Dorsolateral prefrontal cortex (tissue), 120 donors: ENCODE measurements at regions of chr18 and their contacts with region 1.

Region 1: GRCh38 chr18:74551936-74552555 is 17.7 kb downstream of the CNDP1 start:
- DNase-seq: peak; percentile 49 to 93 (median 82)
- H3K4me3 ChIP-seq: peak overlapping the region in 3 of 59 donors; percentile 2 to 7 (median 2)
- H3K27ac ChIP-seq: peak overlapping the region in 50 of 59 donors; percentile 0 to 83 (median 61)
- H3K27me3 ChIP-seq: no peaks in the 10 kb centered on the region
- CTCF ChIP-seq: peak; percentile 56 to 95 (median 88)

Region 2: GRCh38 chr18:74196220-74197119 is 355.6 kb before region 1 on chr18:
- intact Hi-C with region 1: loop called (anchors 5 to 10 kb)
- DNase-seq: peak in 3 of 10 donors; percentile 50 to 54 (median 50)
- H3K4me3 ChIP-seq: peak overlapping the region in 41 of 59 donors; percentile 1 to 58 (median 35)
- H3K27ac ChIP-seq: peak overlapping the region in 1 of 59 donors; percentile 29
- H3K27me3 ChIP-seq: no peaks in the 10 kb centered on the region
- CTCF ChIP-seq: peak; percentile 82 to 99 (median 93)

Region 3: GRCh38 chr18:74353169-74353775 is 198.8 kb before region 1 on chr18:
- intact Hi-C with region 1: loop called (anchors 2 to 5 kb)
- DNase-seq: peak; percentile 43 to 90 (median 79)
- H3K4me3 ChIP-seq: no peak overlapping the region
- H3K27ac ChIP-seq: peak overlapping the region in 1 of 59 donors; percentile 18
- H3K27me3 ChIP-seq: no peaks in the 10 kb centered on the region
- CTCF ChIP-seq: peak; percentile 62 to 98 (median 89)

Region 4: GRCh38 chr18:74412116-74412880 is 139.7 kb before region 1 on chr18:
- intact Hi-C with region 1: loop called in 1 of 2 experiments (anchors 5 kb)
- DNase-seq: peak; percentile 26 to 91 (median 84)
- H3K4me3 ChIP-seq: peak overlapping the region in 51 of 59 donors; percentile 6 to 62 (median 34)
- H3K27ac ChIP-seq: peak overlapping the region in 42 of 59 donors; percentile 1 to 76 (median 46)
- H3K27me3 ChIP-seq: peaks cover 0 to 11% (median 0%) of the 10 kb centered on the region in 45 donors
- CTCF ChIP-seq: peak in 5 of 56 donors; percentile 5 to 33 (median 17)

Region 5: GRCh38 chr18:74450626-74451025 is 101.4 kb before region 1 on chr18:
- intact Hi-C with region 1: loop called in 1 of 2 experiments (anchors 5 kb)
- DNase-seq: peak in 6 of 10 donors; percentile 42 to 70 (median 60)
- H3K4me3 ChIP-seq: peak overlapping the region in 5 of 59 donors; percentile 17 to 26 (median 19)
- H3K27ac ChIP-seq: peak overlapping the region in 16 of 59 donors; percentile 3 to 59 (median 35)
- H3K27me3 ChIP-seq: peaks cover 0 to 3% (median 0%) of the 10 kb centered on the region in 45 donors
- CTCF ChIP-seq: peak in 4 of 56 donors; percentile 5 to 17 (median 12)

Region 6: DNA sequence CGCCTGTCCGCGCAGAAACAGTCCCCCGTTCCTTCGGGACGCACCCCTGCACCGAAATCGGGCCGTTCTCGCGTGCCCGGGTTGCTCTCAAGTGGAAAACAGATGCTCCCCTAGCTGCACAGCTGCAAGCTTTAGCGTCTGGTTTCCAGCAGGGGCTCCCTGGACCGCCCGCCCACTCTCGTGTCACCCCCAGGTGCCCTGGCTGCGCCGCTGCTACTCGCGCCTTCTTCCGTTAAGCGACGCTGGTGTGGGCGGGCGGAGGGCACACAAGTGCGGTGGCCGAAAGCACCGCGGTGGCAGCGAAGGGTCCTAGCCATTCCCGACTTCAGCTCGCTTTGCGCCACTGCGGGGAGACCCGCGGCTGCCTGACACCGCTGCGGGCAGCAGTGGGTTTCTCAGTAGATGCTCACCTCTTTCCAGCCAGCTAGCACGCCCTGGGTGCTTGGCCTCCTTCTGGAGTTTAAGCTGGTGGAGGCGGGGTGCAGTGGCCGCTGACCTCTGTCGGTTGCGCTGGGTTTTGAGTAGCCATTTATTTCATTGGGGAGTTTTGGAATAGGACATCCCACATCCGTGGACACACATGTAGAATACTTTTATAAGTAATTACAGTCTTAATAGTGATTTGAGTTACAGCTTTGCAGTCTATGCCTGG is 46.4 kb after region 1 on chr18:
- intact Hi-C with region 1: no loop called
- DNase-seq: peak in 8 of 10 donors; percentile 21 to 68 (median 47)
- H3K4me3 ChIP-seq: peak overlapping the region; percentile 70 to 100 (median 94)
- H3K27ac ChIP-seq: peak overlapping the region; percentile 83 to 100 (median 99)
- H3K27me3 ChIP-seq: no peaks in the 10 kb centered on the region
- CTCF ChIP-seq: peak in 5 of 56 donors; percentile 2 to 16 (median 10)